ENCODE measurements at regions of chr2 and their contacts with region 1.

Region 1: DNA sequence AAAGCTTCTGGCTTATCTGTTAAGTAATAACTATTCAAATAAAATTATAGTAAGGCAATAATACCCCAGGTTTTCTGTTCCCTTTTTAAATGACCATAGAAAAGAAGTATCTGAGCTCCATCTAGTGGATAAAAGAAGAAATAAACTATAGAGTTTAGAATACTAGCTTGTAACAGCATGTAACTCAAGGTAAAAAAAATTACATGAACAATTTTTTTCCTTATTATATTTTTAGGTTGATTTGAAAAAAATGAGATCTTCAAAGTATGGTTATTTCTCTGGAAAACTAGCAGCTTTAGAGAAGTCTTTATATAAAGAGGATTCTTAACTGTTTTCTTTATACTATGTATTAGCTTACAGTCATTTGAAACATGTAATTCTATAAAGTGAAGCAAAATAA is 58.1 kb downstream of the NCKAP1 start:
- DNase-seq: no peak
- H3K4me3 Mint-ChIP-seq: no peak overlapping the region
- H3K27ac Mint-ChIP-seq: no peak overlapping the region
- H3K4me1 Mint-ChIP-seq: no peaks in the 10 kb centered on the region
- H3K27me3 Mint-ChIP-seq: no peaks in the 10 kb centered on the region
- CTCF ChIP-seq: no peak

Region 2: DNA sequence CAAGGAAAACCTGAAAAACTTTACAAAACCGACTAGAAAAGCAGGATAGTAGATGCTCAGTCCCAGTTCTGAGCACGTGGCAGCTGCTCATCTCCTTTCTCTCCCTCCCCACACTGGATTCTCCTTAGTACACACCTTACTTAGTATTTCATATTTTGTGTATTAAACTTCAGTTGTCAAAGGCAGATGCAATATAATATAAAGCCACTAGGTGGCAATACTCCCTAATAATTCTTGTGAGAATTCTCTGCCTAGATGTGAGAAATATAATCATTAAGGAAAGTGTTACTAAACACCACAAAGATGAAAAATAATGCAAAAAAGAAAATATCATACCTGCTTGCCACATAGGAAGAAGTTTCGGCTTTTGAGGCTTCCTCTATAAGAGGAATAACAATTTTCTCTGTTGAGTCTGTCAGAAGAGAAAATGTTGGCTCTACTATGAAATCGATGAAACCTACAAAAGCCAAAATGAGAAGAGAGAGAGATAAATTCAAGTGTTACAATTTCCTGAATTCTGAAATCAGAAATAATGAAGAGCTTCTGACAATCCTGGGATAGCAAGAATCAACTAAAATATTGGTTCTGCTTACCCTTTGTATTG is 793.9 kb before region 1 on chr2:
- CTCF ChIA-PET with region 1: no interaction called
- intact Hi-C with region 1: loop called (anchors 5 kb)
- DNase-seq: peak; percentile 26
- H3K4me3 Mint-ChIP-seq: no peak overlapping the region
- H3K27ac Mint-ChIP-seq: no peak overlapping the region
- H3K4me1 Mint-ChIP-seq: no peaks in the 10 kb centered on the region
- H3K27me3 Mint-ChIP-seq: no peaks in the 10 kb centered on the region
- CTCF ChIP-seq: peak; percentile 64

Region 3: GRCh38 chr2:182393270-182393760 is 586.8 kb before region 1 on chr2:
- CTCF ChIA-PET with region 1: no interaction called
- intact Hi-C with region 1: no loop called
- DNase-seq: no peak
- H3K4me3 Mint-ChIP-seq: no peak overlapping the region
- H3K27ac Mint-ChIP-seq: no peak overlapping the region
- H3K4me1 Mint-ChIP-seq: no peaks in the 10 kb centered on the region
- H3K27me3 Mint-ChIP-seq: no peaks in the 10 kb centered on the region
- CTCF ChIP-seq: no peak

Region 4: DNA sequence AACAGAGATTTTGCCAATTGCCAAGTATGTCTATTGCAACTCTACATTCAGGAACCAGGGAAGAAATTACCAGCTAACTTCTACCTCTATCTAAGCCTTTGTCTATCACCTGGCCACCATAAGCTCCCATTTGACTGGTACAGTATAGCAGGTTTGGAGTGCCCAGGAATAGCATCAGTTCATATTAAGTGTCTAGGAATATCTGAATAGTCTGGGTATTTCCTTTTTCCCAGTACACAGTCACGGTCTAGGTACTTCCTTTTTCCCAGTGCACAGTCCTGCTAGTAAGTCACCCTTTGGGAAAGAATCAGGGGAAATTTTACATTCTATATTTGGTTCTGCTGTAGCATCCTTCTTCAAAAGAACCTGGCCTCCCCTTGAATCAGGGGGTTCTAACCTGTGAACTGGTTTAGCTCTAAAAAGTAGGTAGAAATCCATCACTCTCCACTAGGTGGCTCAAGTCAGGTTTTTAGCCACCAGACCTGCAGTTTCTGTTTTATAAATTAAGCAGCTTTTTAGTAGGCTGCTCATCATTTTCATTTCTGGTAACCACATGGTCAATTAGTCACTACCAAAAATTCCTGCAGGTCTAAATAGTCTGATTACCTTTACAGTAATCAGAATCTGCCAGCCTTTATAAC is 313.3 kb before region 1 on chr2:
- CTCF ChIA-PET with region 1: no interaction called
- intact Hi-C with region 1: loop called (anchors 5 kb)
- DNase-seq: peak; percentile 31
- H3K4me3 Mint-ChIP-seq: no peak overlapping the region
- H3K27ac Mint-ChIP-seq: no peak overlapping the region
- H3K4me1 Mint-ChIP-seq: peaks cover 27% of the 10 kb centered on the region
- H3K27me3 Mint-ChIP-seq: no peaks in the 10 kb centered on the region
- CTCF ChIP-seq: no peak

Region 5: DNA sequence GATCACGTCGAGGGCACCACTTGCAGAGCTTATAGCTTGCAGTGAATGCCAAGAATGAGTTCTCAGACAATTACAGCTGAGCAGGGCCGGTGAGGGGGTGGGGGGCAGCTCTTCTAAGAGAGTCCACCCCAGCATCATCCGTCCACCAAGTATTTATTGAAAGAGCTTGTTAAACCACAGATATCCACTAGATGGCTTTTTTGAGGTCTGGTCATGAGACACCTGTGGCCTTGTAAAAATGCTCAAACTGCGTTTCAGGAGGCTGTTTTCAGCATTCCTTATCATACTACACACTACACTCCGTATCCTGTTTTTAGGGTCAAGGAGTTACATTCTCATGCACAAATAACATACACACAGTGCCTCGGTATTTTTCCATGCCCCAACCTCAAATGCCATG is 212.5 kb before region 1 on chr2:
- CTCF ChIA-PET with region 1: interaction called, 10 read pairs
- intact Hi-C with region 1: no loop called
- DNase-seq: no peak
- H3K4me3 Mint-ChIP-seq: no peak overlapping the region
- H3K27ac Mint-ChIP-seq: no peak overlapping the region
- H3K4me1 Mint-ChIP-seq: no peaks in the 10 kb centered on the region
- H3K27me3 Mint-ChIP-seq: no peaks in the 10 kb centered on the region
- CTCF ChIP-seq: peak; percentile 37

Region 6: GRCh38 chr2:182784777-182785176 is 195.3 kb before region 1 on chr2:
- CTCF ChIA-PET with region 1: no interaction called
- intact Hi-C with region 1: loop called (anchors 2 kb)
- DNase-seq: no peak
- H3K4me3 Mint-ChIP-seq: no peak overlapping the region
- H3K27ac Mint-ChIP-seq: no peak overlapping the region
- H3K4me1 Mint-ChIP-seq: no peaks in the 10 kb centered on the region
- H3K27me3 Mint-ChIP-seq: no peaks in the 10 kb centered on the region
- CTCF ChIP-seq: no peak

Region 7: GRCh38 chr2:182862091-182862490 is 118.0 kb before region 1 on chr2:
- CTCF ChIA-PET with region 1: no interaction called
- intact Hi-C with region 1: no loop called
- DNase-seq: no peak
- H3K4me3 Mint-ChIP-seq: no peak overlapping the region
- H3K27ac Mint-ChIP-seq: no peak overlapping the region
- H3K4me1 Mint-ChIP-seq: peaks cover 9% of the 10 kb centered on the region
- H3K27me3 Mint-ChIP-seq: peaks cover 18% of the 10 kb centered on the region
- CTCF ChIP-seq: no peak

Region 8: GRCh38 chr2:183112577-183112976 is 132.5 kb after region 1 on chr2:
- CTCF ChIA-PET with region 1: no interaction called
- intact Hi-C with region 1: no loop called
- DNase-seq: no peak
- H3K4me3 Mint-ChIP-seq: no peak overlapping the region
- H3K27ac Mint-ChIP-seq: no peak overlapping the region
- H3K4me1 Mint-ChIP-seq: no peaks in the 10 kb centered on the region
- H3K27me3 Mint-ChIP-seq: no peaks in the 10 kb centered on the region
- CTCF ChIP-seq: no peak